Astrocyte of the cerebellum (primary cell): ENCODE measurements at regions of chr7 and their contacts with region 1.

Region 1: GRCh38 chr7:151648429-151648828 is 128.7 kb upstream of the RHEB start:
- DNase-seq: no peak
- H3K4me3 ChIP-seq: no peak overlapping the region
- CTCF ChIP-seq: no peak

Region 2: DNA sequence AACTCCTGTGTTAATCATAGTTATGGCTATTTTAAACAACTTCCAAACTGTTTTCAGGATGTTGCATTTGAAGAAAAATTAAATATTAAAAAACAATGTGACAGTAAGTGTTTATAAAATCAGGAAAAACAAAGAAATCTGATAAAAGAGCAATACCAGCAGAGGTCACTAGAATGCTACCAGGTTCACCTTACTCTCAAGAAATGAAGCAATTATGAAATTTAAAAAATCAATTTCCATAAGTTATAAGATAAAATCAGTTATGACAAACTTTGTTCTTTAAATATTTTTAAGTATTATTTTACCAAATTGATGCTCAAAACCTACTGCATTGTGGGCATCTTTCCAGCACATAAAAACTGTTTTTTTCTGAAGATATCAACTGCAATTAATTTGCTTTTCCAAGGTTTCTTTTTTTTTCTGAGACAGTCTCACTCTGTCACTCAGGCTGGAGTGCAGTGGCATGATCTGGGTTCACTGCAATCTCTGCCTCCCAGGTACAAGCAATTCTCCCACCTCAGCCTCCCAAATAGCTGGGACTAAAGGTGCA is 78.0 kb before region 1 on chr7:
- in situ Hi-C with region 1: no loop called
- DNase-seq: peak; percentile 35
- H3K4me3 ChIP-seq: no peak overlapping the region
- CTCF ChIP-seq: peak; percentile 46

Region 3: GRCh38 chr7:151608031-151608551 is 40.3 kb before region 1 on chr7:
- in situ Hi-C with region 1: loop called (anchors 5 kb)
- DNase-seq: no peak
- H3K4me3 ChIP-seq: no peak overlapping the region
- CTCF ChIP-seq: peak; percentile 30

Region 4: GRCh38 chr7:151696721-151697514 is 48.5 kb after region 1 on chr7:
- in situ Hi-C with region 1: loop called (anchors 5 kb)
- DNase-seq: no peak
- H3K4me3 ChIP-seq: no peak overlapping the region
- CTCF ChIP-seq: no peak